Pancreas (tissue), 10 donors: ENCODE measurements at regions of chr2 and their contacts with region 1.

Region 1: DNA sequence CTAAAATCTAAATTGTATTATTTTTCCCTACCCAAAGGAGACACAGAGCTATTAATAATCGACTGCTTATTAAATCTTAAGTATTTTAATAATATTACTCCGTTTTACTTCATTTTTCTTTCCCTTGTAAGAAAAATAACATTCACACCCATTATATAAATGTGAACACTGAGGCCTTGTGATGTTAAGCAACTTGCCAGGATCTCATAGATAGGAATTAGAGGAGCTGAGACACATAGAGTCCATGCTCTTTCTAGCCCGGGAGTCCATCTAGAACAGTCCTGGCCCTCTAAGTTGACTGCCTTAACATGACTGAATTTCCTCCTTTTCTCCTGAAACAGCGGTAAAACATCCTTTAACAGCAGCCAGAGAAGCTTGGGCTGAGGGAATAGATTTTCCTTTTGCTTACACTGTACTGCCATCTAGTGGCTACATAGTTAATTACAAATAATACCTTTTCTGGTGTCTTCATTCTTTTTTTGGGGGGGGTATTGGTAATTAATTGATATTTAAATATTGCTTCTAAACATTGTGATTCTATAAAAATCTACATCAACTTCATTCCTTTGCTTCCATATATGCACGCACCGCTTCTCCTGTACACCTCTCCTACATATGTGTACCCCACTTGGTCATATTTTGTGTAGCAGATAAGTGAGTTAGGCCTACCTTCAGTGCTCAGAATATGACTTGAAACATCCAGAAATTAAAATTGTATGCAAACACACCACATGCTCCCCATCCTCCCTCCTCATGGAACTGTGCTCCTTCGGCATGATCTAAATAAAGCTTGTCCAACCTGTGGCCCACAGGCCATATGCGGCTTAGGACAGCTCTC is 125.8 kb upstream of the HNMT start:
- DNase-seq: no peak
- ATAC-seq: peak in 3 of 4 donors; percentile 74 to 83 (median 77)
- H3K4me3 ChIP-seq: no peak overlapping the region
- H3K27ac ChIP-seq: no peak overlapping the region
- H3K4me1 ChIP-seq: no peaks in the 10 kb centered on the region
- H3K27me3 ChIP-seq: no peaks in the 10 kb centered on the region
- CTCF ChIP-seq: peak in 3 of 4 donors; percentile 23 to 60 (median 58)

Region 2: DNA sequence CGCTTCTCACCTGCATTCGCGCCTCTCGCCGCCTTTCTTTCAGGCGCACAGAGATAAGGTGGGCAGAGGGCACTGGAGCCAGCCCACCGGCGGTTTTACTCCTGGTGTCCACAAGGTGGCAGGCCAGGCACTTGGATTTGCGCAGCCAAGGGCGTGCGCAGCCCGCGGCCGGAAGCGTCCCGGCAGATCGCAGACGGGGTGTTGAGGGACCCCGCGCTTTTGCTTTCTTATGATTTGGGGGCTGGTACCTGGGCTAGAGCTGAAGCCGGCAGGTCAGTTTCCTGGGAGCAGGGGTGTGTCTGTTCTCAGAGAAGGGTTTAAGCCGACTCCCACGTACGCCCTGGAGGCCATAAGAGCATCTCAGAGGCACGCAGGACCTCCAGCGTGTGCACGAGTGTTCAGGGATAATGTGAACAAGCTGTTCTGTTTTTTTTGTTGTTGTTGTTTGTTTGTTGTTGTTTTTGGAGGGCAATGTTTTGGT is 1414.9 kb before region 1 on chr2:
- intact Hi-C with region 1: loop called in 2 of 3 experiments (anchors 5 to 10 kb)
- DNase-seq: peak; percentile 49 to 89 (median 70)
- ATAC-seq: peak; percentile 96 to 100 (median 98)
- H3K4me3 ChIP-seq: peak overlapping the region in 2 of 4 donors; percentile 15 to 34
- H3K27ac ChIP-seq: no peak overlapping the region
- H3K4me1 ChIP-seq: no peaks in the 10 kb centered on the region
- H3K27me3 ChIP-seq: no peaks in the 10 kb centered on the region
- CTCF ChIP-seq: peak; percentile 56 to 87 (median 84)

Region 3: DNA sequence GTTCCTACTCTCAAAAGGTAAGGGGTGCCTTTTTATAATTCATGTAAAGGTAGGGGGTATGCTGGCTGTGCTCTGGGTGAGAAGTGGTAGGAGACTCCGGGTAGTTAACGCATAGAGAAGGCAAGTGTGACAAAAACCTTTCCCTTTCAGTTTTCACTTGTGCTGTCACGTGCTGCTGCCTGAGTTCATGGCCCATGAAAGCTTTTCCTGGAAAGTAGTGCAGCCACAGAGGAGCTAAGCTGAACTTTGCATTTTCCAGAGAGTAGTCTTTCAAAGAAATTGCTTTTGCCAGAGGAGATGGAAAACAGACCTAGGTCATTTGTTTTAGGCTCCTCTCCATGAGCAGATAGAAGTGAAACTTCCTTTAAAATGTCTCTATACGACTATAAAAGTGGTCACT is 1028.5 kb before region 1 on chr2:
- intact Hi-C with region 1: no loop called
- DNase-seq: no peak
- ATAC-seq: no peak
- H3K4me3 ChIP-seq: no peak overlapping the region
- H3K27ac ChIP-seq: no peak overlapping the region
- H3K4me1 ChIP-seq: no peaks in the 10 kb centered on the region
- H3K27me3 ChIP-seq: no peaks in the 10 kb centered on the region
- CTCF ChIP-seq: no peak

Region 4: GRCh38 chr2:137467246-137467862 is 371.1 kb before region 1 on chr2:
- intact Hi-C with region 1: loop called in 2 of 3 experiments (anchors 5 to 10 kb)
- DNase-seq: peak in 3 of 6 donors; percentile 8 to 39 (median 14)
- ATAC-seq: peak in 3 of 4 donors; percentile 64 to 70 (median 67)
- H3K4me3 ChIP-seq: no peak overlapping the region
- H3K27ac ChIP-seq: no peak overlapping the region
- H3K4me1 ChIP-seq: no peaks in the 10 kb centered on the region
- H3K27me3 ChIP-seq: no peaks in the 10 kb centered on the region
- CTCF ChIP-seq: peak in 3 of 4 donors; percentile 6 to 39 (median 39)

Region 5: GRCh38 chr2:138364554-138365162 is 526.2 kb after region 1 on chr2:
- intact Hi-C with region 1: no loop called
- DNase-seq: no peak
- ATAC-seq: peak in 3 of 4 donors; percentile 49 to 69 (median 55)
- H3K4me3 ChIP-seq: no peak overlapping the region
- H3K27ac ChIP-seq: no peak overlapping the region
- H3K4me1 ChIP-seq: peaks cover 2 to 5% (median 3%) of the 10 kb centered on the region in 3 donors
- H3K27me3 ChIP-seq: no peaks in the 10 kb centered on the region
- CTCF ChIP-seq: no peak